ENCODE measurements at regions of chr19 and their contacts with region 1.

Region 1: DNA sequence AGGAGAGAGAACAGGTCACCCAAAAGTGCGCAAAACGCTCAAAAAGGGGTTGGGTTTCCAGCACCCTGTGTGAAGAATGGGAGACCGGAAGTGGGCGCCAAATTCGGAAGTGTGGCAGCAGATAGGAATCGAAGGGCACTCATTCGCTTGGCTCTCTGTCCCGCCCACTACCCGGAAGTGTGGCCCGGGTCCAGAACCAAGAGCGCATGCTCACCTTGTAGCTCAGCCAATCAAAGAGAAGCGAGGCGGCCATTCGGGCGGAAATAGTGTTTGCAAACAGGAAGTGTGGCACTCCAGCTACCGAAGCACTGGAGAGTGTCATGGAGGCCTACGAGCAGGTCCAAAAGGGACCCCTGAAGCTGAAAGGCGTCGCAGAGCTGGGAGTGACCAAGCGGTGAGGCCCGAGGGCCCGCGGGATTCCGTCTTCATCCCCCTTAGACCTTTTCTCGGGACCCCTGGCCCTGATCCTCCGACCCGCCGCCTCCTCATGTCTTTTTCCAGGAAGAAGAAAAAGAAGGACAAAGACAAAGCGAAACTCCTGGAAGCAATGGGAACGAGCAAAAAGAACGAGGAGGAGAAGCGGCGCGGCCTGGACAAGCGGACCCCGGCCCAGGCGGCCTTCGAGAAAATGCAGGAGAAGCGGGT is at the start of gene FAM32A:
- DNase-seq: peak; percentile 98
- ATAC-seq: peak; percentile 97
- H3K4me3 ChIP-seq: peak within 1 kb of the TSS; percentile 84 to 96 (median 95)
- H3K27ac ChIP-seq: peak within 1 kb of the TSS; percentile 73
- H3K4me1 ChIP-seq: peaks cover 26% of the 10 kb centered on the region
- H3K27me3 ChIP-seq: no peaks in the 10 kb centered on the region; a peak in 1 of 5 replicates
- CTCF ChIP-seq: peak; percentile 37; the same call in 1 of the 2 replicates
- EP300 ChIP-seq: no peak
- POLR2A ChIP-seq: peak; percentile 79 to 95
- RAD21 ChIP-seq: 0 out of 2 replicates have a peak, but pooled peaks have one; percentile 10
- total RNA-seq, gene FAM32A: 86.2 and 107 TPM in 2 replicates

Region 2: DNA sequence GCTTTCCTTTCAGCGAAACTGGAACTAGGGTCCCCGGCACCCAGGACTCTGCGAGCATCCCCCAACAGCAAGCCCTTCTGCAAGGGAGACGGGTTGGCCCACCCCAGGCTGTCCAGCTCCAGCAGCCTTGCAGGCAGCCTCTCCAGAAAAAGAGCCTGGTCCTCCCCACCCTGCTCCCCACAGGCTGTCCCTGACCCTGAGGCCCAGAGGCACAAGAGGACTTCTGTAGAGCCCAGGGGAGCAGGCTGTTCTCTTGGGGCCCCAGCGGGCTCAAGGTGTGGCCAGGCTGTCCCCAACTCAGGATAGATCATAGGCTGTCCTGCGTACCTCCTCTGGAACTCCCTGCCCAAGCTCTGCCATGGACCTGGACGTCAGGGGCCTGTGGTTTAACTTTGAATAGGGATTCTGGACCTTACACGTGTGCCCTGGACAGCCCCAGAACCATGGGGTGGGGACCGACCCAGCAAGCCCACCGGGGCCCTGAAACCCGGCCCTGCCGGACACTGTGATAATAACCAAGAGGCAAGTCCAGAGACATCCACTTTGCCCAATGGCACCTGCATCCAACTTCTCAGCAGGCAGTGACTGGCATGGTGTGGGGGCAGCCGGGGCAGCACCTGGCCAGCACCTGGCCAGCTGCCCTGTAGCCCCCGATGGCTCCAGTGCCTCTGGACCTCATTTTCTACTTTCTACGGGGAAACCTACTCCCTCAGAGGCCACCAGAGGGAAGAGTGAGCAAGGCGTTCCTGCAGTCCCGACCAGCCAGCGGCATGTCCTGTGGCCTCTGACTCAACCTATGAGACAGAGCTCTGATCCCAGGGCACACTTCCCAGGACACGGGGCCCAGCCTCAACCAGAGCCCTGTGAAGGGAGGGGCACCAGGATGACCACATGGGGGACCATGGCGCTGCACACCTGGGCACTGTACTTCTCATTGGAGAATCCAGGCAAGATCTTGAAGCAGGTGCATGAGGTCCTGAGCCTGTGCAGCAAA is 159.8 kb before region 1 on chr19:
- CTCF ChIA-PET with region 1: interaction called, 11 read pairs
- POLR2A ChIA-PET with region 1: interaction called, 10 read pairs
- in situ Hi-C with region 1: no loop called
- intact Hi-C with region 1: loop called (anchors 1 kb)
- DNase-seq: peak; percentile 61
- ATAC-seq: peak; percentile 96
- H3K4me3 ChIP-seq: no peak overlapping the region
- H3K27ac ChIP-seq: no peak overlapping the region
- H3K4me1 ChIP-seq: no peaks in the 10 kb centered on the region
- H3K27me3 ChIP-seq: peaks cover 2 to 22% of the 10 kb centered on the region in 2 experiments; a peak in 4 of 5 replicates
- CTCF ChIP-seq: peak; percentile 81
- EP300 ChIP-seq: no peak
- POLR2A ChIP-seq: no peak
- RAD21 ChIP-seq: peak; percentile 75

Region 3: DNA sequence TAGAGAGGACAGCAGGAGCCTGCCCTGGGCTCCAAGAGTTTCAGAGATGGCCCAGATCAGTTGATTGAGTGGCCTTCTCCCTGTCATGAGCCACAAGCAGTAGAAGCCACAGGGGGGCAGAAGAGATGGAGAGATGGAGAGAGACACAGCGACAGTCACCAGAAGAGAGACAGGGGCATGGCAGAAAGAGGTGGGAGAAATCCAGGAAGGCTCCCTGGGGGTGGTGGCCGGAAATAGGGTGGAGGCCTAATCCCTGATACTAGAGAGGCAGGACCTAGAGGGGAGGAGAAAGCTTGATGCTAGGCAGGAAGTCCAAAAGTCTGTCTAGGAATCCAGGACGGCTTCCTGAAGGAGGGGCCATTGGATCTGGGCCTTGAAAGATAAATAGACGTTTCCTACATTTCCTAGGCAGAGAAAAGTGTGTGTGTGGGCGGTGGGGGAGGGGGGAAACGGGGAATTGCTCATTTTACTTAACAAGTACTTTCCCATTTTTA is 118.6 kb before region 1 on chr19:
- CTCF ChIA-PET with region 1: interaction called, 21 read pairs
- POLR2A ChIA-PET with region 1: interaction called, 8 read pairs
- in situ Hi-C with region 1: no loop called
- intact Hi-C with region 1: loop called (anchors 1 kb)
- DNase-seq: peak; percentile 81
- ATAC-seq: peak; percentile 66
- H3K4me3 ChIP-seq: no peak overlapping the region
- H3K27ac ChIP-seq: no peak overlapping the region
- H3K4me1 ChIP-seq: peaks cover 51% of the 10 kb centered on the region
- H3K27me3 ChIP-seq: no peaks in the 10 kb centered on the region
- CTCF ChIP-seq: peak; percentile 86
- EP300 ChIP-seq: no peak
- POLR2A ChIP-seq: no peak
- RAD21 ChIP-seq: peak; percentile 82

Region 4: DNA sequence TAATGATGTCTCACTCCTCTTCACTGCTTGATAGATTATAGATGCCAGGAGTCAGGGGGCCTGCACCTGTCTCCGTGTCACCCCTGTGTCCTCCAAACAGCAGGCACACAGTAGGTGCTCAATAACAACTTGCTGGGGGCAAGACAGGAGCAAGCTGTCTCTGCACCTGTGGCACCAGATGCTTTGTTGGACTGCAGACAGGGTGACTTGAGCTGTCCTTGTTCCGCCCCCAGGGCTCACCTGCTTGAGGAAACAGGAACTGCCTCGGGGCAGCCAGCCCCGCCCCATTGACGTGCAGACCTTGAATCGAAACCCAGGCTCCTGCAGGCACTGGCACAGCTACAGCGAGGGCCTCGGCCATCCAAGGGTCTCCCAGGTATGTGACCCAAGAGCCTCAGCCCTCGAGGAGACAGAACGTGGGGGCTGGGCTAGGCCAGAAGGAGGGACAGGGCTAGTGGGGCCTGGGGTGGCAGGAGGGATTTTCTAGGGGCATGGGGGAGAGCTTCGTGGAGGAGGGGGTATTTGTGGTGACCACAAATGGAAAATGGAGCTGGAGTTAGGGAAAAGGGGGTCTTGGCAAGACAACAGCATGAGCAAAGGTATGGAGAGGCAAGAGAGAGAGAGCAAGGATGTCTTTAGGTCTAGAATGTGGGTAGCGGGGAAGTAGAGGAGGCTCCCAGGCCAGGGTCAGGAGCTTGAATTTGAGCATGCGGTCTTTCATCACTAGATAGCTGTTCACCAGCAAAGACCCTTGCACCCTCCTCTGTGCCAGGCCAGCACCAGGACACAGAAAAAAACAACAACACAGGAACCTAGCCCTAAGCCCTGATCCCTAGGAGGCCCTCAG is 41.6 kb before region 1 on chr19 and contains the start of gene HSH2D:
- CTCF ChIA-PET with region 1: no interaction called
- POLR2A ChIA-PET with region 1: interaction called, 10 read pairs
- in situ Hi-C with region 1: no loop called
- intact Hi-C with region 1: no loop called
- DNase-seq: peak; percentile 45
- ATAC-seq: peak; percentile 77
- H3K4me3 ChIP-seq: peak within 1 kb of the TSS; percentile 56 to 68 (median 61)
- H3K27ac ChIP-seq: peak within 1 kb of the TSS; percentile 53
- H3K4me1 ChIP-seq: peaks cover 33% of the 10 kb centered on the region
- H3K27me3 ChIP-seq: no peaks in the 10 kb centered on the region
- CTCF ChIP-seq: no peak
- EP300 ChIP-seq: no peak
- POLR2A ChIP-seq: peak in 1 of 2 experiments; percentile 60; a peak in 2 of 4 replicates
- RAD21 ChIP-seq: no peak
- total RNA-seq, gene HSH2D: 0.53 and 0.69 TPM in 2 replicates

Region 5: DNA sequence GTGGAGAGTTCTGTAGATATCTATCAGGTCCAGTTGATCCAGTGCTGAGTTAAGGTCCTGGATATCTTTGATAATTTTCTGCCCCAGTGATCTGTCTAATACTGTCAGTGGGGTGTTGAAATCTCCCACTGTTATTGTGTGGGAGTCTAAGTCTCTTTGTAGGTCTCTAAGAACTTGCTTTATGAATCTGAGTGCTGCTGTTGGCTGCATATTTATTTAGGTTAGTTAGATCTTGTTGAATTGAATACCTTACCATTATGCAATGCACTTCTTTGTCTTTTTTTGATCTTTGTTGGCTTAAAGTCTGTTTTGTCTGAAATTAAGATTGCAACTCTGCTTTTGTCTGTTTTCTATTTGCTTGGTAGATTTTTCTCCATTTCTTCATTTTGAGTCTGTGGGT is 27.8 kb after region 1 on chr19:
- CTCF ChIA-PET with region 1: no interaction called
- POLR2A ChIA-PET with region 1: no interaction called
- in situ Hi-C with region 1: no loop called
- intact Hi-C with region 1: no loop called
- DNase-seq: no peak
- ATAC-seq: no peak
- H3K4me3 ChIP-seq: no peak overlapping the region
- H3K27ac ChIP-seq: no peak overlapping the region
- H3K4me1 ChIP-seq: no peaks in the 10 kb centered on the region
- H3K27me3 ChIP-seq: no peaks in the 10 kb centered on the region
- CTCF ChIP-seq: no peak
- EP300 ChIP-seq: no peak
- POLR2A ChIP-seq: no peak
- RAD21 ChIP-seq: no peak

Region 6: DNA sequence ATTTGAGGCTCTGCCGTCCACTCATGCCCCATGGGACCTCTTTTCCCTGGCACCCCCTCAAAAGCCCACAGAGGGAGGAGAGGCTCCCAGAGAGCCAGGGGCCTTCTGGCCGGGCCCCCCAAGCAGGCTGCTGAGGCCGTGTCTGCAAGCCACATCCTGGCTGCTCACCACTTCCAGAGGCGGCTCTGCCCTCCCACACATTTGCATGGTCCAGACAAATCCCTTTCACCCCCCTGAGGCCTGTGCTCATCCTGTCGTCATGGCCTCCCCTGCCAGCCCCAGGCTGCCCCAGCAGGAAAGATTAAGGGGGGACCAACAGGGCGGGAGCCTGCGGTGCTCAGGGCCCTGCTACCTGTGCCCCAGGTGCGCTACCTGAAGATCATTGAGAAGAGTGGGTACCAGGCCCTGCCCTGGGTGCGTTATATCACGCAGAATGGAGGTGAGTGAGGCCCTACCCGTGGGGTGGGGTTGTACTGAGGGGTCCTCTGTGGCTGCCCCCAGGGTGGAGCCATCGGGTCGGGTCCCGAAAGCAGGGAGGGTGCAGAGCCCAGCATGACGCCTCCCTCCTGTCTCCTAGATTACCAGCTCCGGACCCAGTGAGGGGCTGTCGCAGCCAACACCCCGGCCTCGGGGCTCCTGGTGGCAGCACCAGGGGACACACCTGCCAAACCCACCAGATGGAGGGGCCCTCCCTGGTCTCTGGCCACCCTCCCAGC is 48.7 kb after region 1 on chr19:
- CTCF ChIA-PET with region 1: no interaction called
- POLR2A ChIA-PET with region 1: no interaction called
- in situ Hi-C with region 1: no loop called
- intact Hi-C with region 1: no loop called
- DNase-seq: no peak
- ATAC-seq: peak; percentile 11; the same call in 1 of the 3 replicates
- H3K4me3 ChIP-seq: no peak overlapping the region
- H3K27ac ChIP-seq: no peak overlapping the region
- H3K4me1 ChIP-seq: no peaks in the 10 kb centered on the region
- H3K27me3 ChIP-seq: no peaks in the 10 kb centered on the region
- CTCF ChIP-seq: no peak
- EP300 ChIP-seq: no peak
- POLR2A ChIP-seq: no peak
- RAD21 ChIP-seq: no peak

Measured in HepG2 (cell line).